ENCODE measurements at regions of chr19 and their contacts with region 1.

Region 1: GRCh38 chr19:41872775-41873647 is 4.1 kb upstream of the CD79A start:
- DNase-seq: peak; percentile 68 to 92
- H3K4me3 ChIP-seq: no peak overlapping the region
- H3K27ac ChIP-seq: no peak overlapping the region
- H3K4me1 ChIP-seq: peaks cover 0 to 2% (median under 1%) of the 10 kb centered on the region in 4 experiments; a peak in 3 of 7 replicates
- H3K27me3 ChIP-seq: no peaks in the 10 kb centered on the region
- CTCF ChIP-seq: peak; percentile 87 to 91 (median 90)
- EP300 ChIP-seq: no peak
- POLR2A ChIP-seq: peak; percentile 77; a peak in 2 of 3 replicates
- RAD21 ChIP-seq: peak; percentile 86 to 90

Region 2: GRCh38 chr19:41883821-41884733 is 11.1 kb after region 1 on chr19:
- CTCF ChIA-PET with region 1: interaction called, 23 read pairs
- POLR2A ChIA-PET with region 1: interaction called, 298 read pairs
- DNase-seq: peak; percentile 90 to 95
- H3K4me3 ChIP-seq: peak overlapping the region; percentile 81 to 97 (median 91)
- H3K27ac ChIP-seq: no peak overlapping the region
- H3K4me1 ChIP-seq: peaks cover 3 to 21% (median 12%) of the 10 kb centered on the region in 4 experiments
- H3K27me3 ChIP-seq: peaks cover 1 to 18% (median 17%) of the 10 kb centered on the region in 4 experiments; a peak in 6 of 7 replicates
- CTCF ChIP-seq: no peak; a peak in 1 of 4 replicates
- EP300 ChIP-seq: peak in 1 of 2 experiments; percentile 85; a peak in 1 of 3 replicates
- POLR2A ChIP-seq: peak in 1 of 2 experiments; percentile 76; a peak in 2 of 3 replicates
- RAD21 ChIP-seq: peak in 1 of 2 experiments; percentile 12; a peak in 1 of 4 replicates

Region 3: GRCh38 chr19:41912899-41913537 is 40.0 kb after region 1 on chr19:
- CTCF ChIA-PET with region 1: interaction called, 3 read pairs
- POLR2A ChIA-PET with region 1: interaction called, 167 read pairs
- DNase-seq: no peak
- H3K4me3 ChIP-seq: peak overlapping the region; percentile 16 to 52 (median 41); a peak in 7 of 8 replicates
- H3K27ac ChIP-seq: no peak overlapping the region
- H3K4me1 ChIP-seq: peaks cover 0 to 23% (median 5%) of the 10 kb centered on the region in 4 experiments; a peak in 5 of 7 replicates
- H3K27me3 ChIP-seq: peaks cover 57 to 87% (median 83%) of the 10 kb centered on the region in 4 experiments
- CTCF ChIP-seq: no peak
- EP300 ChIP-seq: no peak
- POLR2A ChIP-seq: no peak
- RAD21 ChIP-seq: no peak

Region 4: DNA sequence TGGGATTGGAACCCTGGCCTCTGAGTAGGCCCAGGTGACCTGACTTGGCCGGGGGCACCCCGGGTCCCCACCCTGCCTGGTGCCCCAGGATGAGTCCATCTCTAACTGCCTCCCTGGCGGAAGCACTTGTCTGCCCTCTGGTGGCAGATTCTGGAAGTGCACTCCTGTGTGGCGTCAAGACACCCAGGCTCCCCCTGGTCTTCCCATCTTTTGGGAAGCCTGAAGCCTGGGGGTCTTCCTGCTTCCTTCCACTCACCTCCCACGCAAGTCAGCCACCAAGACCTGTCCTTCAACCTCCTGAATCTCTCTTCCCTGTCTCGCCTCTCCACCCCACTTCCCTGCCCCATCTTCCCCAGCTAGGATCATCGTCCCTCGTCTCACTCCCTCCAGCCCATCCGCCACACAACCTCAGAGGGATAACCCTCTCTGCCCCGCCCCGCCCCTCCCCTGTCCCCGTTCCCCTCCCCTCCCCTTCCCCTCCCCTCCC is 78.7 kb after region 1 on chr19:
- CTCF ChIA-PET with region 1: interaction called, 33 read pairs
- POLR2A ChIA-PET with region 1: interaction called, 54 read pairs
- DNase-seq: peak; percentile 76 to 99
- H3K4me3 ChIP-seq: peak overlapping the region in 3 of 4 experiments; percentile 32 to 52 (median 38); a peak in 6 of 8 replicates
- H3K27ac ChIP-seq: no peak overlapping the region
- H3K4me1 ChIP-seq: no peaks in the 10 kb centered on the region
- H3K27me3 ChIP-seq: no peaks in the 10 kb centered on the region
- CTCF ChIP-seq: peak; percentile 93 to 98 (median 97)
- EP300 ChIP-seq: no peak
- POLR2A ChIP-seq: no peak
- RAD21 ChIP-seq: peak; percentile 89 to 90

Measured in H1 (cell line).